ENCODE measurements at regions of chr17 and their contacts with region 1.

Region 1: GRCh38 chr17:73369111-73369521 is 57.3 kb upstream of the CDC42EP4 start:
- DNase-seq: peak in 1 of 2 donors; percentile 31
- H3K4me3 ChIP-seq: no peak overlapping the region
- H3K27ac ChIP-seq: no peak overlapping the region
- H3K4me1 ChIP-seq: peaks cover 0 to 14% (median 6%) of the 10 kb centered on the region in 4 donors
- H3K27me3 ChIP-seq: no peaks in the 10 kb centered on the region
- CTCF ChIP-seq: no peak
- EP300 ChIP-seq: no peak
- POLR2A ChIP-seq: no peak

Region 2: GRCh38 chr17:73156166-73156840 is 212.8 kb before region 1 on chr17:
- intact Hi-C with region 1: no loop called
- DNase-seq: peak; percentile 83 to 89
- H3K4me3 ChIP-seq: no peak overlapping the region
- H3K27ac ChIP-seq: no peak overlapping the region
- H3K4me1 ChIP-seq: peaks cover 0 to 34% (median 20%) of the 10 kb centered on the region in 4 donors
- H3K27me3 ChIP-seq: peaks cover 0 to 23% (median 0%) of the 10 kb centered on the region in 3 donors
- CTCF ChIP-seq: peak in 5 of 7 experiments; percentile 57 to 83 (median 79)
- EP300 ChIP-seq: no peak
- POLR2A ChIP-seq: no peak

Region 3: DNA sequence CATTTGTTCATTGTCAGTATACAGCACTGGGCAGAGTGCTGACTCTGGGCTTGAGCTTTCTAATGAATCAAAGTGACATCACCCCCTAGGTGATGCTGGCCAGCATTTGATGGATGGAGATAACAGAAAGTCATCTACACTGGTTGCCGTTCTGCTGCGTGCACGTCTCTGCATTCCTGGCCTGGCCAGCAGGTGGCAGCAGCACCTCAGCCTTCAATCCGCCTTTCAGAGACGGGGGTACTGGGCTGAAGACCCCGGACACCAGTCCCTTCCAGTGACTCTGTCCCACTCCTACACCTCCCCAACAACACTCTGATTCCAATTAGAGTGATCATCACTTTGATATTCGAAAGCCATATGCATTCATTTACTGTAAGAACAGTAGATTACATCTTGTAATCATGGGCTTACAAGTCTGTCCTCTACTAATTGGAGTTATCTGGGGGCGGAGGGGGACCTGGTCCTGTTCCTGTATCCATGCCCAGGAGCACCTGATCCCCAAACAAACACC is 113.4 kb before region 1 on chr17:
- intact Hi-C with region 1: loop called (anchors 2 kb)
- DNase-seq: peak; percentile 51 to 81
- H3K4me3 ChIP-seq: no peak overlapping the region
- H3K27ac ChIP-seq: no peak overlapping the region
- H3K4me1 ChIP-seq: peaks cover 0 to 12% (median 6%) of the 10 kb centered on the region in 4 donors
- H3K27me3 ChIP-seq: no peaks in the 10 kb centered on the region
- CTCF ChIP-seq: peak in 6 of 7 experiments; percentile 43 to 98 (median 96)
- EP300 ChIP-seq: no peak
- POLR2A ChIP-seq: no peak

Region 4: DNA sequence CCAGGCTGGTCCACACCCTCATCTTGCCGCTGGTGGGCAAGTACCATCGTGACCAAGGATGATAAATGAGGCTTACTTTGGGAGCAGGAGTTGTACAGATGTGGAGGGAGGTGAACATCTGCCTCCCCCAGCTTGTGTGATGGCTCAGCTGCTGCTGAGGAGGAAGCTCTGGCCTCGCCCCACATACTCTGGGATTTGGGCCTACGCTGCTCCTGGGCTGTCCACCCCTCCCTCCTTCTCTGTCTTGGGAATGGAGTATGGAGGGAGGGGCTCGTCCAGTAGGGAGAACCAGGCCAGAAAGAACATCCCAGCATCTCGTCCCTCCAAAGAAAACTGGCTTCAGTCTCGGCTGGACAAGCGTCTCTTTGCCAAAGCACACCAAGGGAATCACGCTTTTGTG is 77.5 kb after region 1 on chr17:
- intact Hi-C with region 1: no loop called
- DNase-seq: peak in 1 of 2 donors; percentile 57
- H3K4me3 ChIP-seq: no peak overlapping the region
- H3K27ac ChIP-seq: no peak overlapping the region
- H3K4me1 ChIP-seq: no peaks in the 10 kb centered on the region
- H3K27me3 ChIP-seq: no peaks in the 10 kb centered on the region
- CTCF ChIP-seq: no peak
- EP300 ChIP-seq: no peak
- POLR2A ChIP-seq: no peak

Measured in stomach (tissue), 19 donors.